HEK293 (cell line): ENCODE measurements at regions of chr18 and their contacts with region 1.

Region 1: DNA sequence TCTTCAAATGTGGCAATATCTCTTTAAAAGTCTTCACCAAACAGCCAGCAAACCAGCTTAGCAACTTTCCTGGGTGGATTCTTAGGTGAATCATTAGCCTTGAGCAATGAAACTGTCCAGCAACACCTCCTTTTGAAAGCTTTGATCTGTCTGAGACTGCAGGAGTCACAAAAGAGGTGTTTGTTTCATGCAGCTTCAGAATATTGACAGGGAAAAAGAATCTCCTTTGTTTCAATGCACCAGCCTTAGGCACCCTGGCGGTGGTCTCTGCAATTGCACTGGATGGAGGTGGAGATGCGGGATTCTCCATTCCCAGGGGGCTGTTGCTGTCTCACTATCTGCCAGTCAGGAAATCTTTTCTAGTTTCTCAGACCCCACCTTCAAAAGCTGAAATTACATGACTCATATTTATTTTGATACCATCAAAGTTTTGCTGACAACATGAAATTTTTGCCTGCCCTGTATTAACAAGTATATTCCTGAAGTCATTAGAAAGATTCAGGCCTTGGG is 76.0 kb upstream of the DSG1 start:
- H3K4me3 ChIP-seq: no peak overlapping the region
- H3K27ac ChIP-seq: no peak overlapping the region
- H3K4me1 ChIP-seq: peaks cover 3% of the 10 kb centered on the region; the same call in 1 of the 2 replicates
- CTCF ChIP-seq: peak; percentile 30; the same call in 1 of the 2 replicates

Region 2: DNA sequence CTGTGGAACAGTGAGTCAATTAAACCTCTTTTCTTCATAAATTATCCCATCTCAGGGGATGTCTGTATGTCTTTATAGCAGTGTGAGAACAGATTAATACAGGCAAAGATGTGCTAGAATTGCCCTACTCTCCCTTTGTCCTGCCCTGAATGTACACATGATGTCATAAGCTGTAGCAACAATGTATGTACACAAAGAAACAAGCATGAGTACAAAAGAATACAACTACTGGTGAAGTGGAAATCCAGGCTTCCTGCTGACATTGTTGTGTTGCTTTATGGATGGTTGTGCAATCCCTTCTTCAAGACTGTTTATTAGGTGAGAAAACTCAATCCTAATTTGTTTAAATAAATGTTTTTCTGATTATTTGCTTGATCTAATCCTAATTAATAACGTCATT is 646.0 kb before region 1 on chr18:
- CTCF ChIA-PET with region 1: no interaction called
- POLR2A ChIA-PET with region 1: no interaction called
- H3K4me3 ChIP-seq: no peak overlapping the region
- H3K27ac ChIP-seq: no peak overlapping the region
- H3K4me1 ChIP-seq: no peaks in the 10 kb centered on the region
- CTCF ChIP-seq: no peak

Region 3: DNA sequence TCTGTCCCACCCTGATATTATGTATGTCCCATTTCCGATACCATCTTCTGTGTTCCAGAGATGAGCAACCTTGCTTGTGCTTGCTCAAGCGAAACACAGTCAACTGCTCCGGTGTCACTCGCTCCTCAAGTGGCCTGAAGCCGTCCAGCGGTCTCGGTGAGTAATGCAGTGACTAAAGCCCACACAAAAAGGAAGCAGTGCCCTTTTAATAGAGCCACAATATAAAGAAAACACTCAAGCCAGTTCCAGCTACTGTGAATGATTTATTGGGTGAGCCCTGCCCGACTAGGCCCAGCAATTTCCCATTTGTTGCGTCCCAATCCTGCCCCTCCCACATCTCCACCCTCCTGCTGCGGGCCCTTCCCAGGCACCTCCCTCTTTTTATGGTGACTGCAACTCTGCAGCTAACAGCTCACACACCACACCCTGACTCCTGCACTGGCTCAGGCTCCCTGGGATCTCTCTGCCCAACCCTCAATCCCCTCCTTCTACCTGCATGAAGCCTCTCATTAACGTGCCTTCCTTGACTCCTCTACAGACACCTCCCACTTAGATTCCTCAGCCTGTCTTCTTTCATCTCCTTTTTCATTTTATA is 35.1 kb before region 1 on chr18:
- CTCF ChIA-PET with region 1: interaction called, 11 read pairs
- POLR2A ChIA-PET with region 1: no interaction called
- H3K4me3 ChIP-seq: no peak overlapping the region
- H3K27ac ChIP-seq: no peak overlapping the region
- H3K4me1 ChIP-seq: 0 out of 2 replicates have a peak, but pooled peaks cover 11% of the 10 kb centered on the region
- CTCF ChIP-seq: peak; percentile 52

Region 4: GRCh38 chr18:31252522-31252921 is 10.6 kb after region 1 on chr18:
- CTCF ChIA-PET with region 1: interaction called, 14 read pairs
- POLR2A ChIA-PET with region 1: no interaction called
- H3K4me3 ChIP-seq: no peak overlapping the region
- H3K27ac ChIP-seq: no peak overlapping the region
- H3K4me1 ChIP-seq: no peaks in the 10 kb centered on the region
- CTCF ChIP-seq: no peak

Region 5: GRCh38 chr18:31634331-31634713 is 392.4 kb after region 1 on chr18:
- CTCF ChIA-PET with region 1: no interaction called
- POLR2A ChIA-PET with region 1: no interaction called
- H3K4me3 ChIP-seq: no peak overlapping the region
- H3K27ac ChIP-seq: no peak overlapping the region
- H3K4me1 ChIP-seq: no peaks in the 10 kb centered on the region
- CTCF ChIP-seq: no peak